BJ (cell line): ENCODE measurements at regions of chr4 and their contacts with region 1.

Region 1: DNA sequence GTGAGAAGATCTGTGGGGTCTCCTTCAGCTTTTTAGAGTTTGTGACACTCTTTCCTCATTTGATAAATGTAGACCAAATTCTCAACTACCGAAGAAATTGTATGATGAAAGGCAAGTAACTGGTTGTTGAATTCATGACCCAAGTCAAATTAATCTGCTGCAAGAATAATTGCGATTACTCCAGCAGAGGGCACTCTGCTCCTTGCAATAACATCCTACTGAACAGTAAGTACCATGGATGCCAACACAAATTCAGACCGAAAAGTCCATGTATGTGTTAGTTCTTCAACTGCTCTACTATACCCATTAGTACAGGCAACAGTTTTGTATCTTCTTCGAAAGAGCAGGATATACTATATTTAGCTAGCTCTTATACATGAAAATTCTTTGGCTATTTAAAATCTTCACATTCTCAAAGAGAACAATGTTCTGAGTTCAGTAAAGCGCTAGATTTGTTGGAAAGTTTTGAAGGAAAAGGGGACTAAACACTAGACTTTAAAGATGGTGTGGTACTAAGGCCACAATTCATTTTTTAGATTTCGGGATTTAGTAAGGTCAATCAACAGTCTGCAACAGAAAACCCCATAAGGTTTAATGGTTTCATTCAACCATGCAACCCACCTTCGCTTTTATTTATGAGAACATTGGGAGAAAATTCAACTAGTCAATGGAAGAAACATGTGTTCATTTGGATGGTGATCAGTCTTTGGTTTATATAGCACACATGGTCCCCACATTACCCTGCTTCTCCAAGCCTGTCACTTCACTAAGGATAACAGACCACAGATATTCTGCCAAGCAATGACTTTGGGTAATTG is 105.4 kb upstream of the TBC1D9 start:
- DNase-seq: peak; percentile 46
- H3K4me3 ChIP-seq: no peak overlapping the region
- H3K27me3 ChIP-seq: no peaks in the 10 kb centered on the region
- CTCF ChIP-seq: peak; percentile 71

Region 2: DNA sequence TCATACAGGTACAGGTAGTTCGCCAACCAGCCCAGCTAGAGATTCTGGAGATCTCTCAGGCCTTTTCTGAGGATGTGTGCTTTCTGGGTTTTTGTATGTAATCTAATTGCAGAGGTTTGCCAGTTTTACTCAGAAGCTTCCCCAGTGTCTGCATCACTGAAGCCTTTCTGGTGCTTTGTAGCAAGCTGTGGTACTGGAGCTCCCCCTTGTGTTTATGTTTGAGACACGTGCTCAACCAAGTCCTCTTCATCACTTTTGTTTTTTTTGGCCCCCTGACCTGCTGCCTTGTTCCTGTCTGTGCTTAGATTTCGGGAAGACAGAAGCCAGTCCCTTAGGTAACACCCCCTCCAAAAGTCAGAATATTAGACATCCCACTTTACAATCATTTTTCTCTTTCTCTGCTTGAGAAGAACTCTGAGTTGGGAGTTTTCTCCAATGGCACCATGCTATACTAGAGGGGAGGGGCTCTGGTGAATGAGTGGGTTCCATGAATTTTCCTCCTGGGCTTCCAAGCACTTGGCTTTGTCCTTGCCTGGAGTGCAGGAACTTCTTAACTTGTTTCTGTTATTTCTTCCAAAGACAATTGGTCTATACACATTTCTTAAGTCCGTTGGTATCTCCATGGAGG is 23.0 kb after region 1 on chr4:
- CTCF ChIA-PET with region 1: interaction called, 16 read pairs
- POLR2A ChIA-PET with region 1: no interaction called
- DNase-seq: no peak
- H3K4me3 ChIP-seq: no peak overlapping the region
- H3K27me3 ChIP-seq: no peaks in the 10 kb centered on the region
- CTCF ChIP-seq: peak; percentile 77

Region 3: GRCh38 chr4:141174457-141174856 is 312.9 kb after region 1 on chr4:
- CTCF ChIA-PET with region 1: no interaction called
- POLR2A ChIA-PET with region 1: no interaction called
- DNase-seq: no peak
- H3K4me3 ChIP-seq: no peak overlapping the region
- H3K27me3 ChIP-seq: peaks cover 2% of the 10 kb centered on the region
- CTCF ChIP-seq: no peak